Activated CD8-positive, alpha-beta memory T cell treated with anti-CD3 and anti-CD28 coated beads, Interleukin-2, amount 10 ng/mL, durations not matched to agents 7 days and 5 days (primary cell): ENCODE measurements at regions of chr5 and their contacts with region 1.

Region 1: GRCh38 chr5:148374692-148375360 is 8.9 kb upstream of the FBXO38 start:
- DNase-seq: peak; percentile 44
- ATAC-seq: peak; percentile 61
- H3K4me3 Mint-ChIP-seq: no peak overlapping the region
- H3K27ac Mint-ChIP-seq: no peak overlapping the region
- H3K4me1 Mint-ChIP-seq: peaks cover 7% of the 10 kb centered on the region
- H3K27me3 Mint-ChIP-seq: no peaks in the 10 kb centered on the region

Region 2: GRCh38 chr5:148314204-148314603 is 60.6 kb before region 1 on chr5:
- CTCF ChIA-PET with region 1: interaction called, 10 read pairs
- DNase-seq: no peak
- ATAC-seq: no peak
- H3K4me3 Mint-ChIP-seq: no peak overlapping the region
- H3K27ac Mint-ChIP-seq: no peak overlapping the region
- H3K4me1 Mint-ChIP-seq: no peaks in the 10 kb centered on the region
- H3K27me3 Mint-ChIP-seq: no peaks in the 10 kb centered on the region